H1 (cell line): ENCODE measurements at regions of chr5 and their contacts with region 1.

Region 1: GRCh38 chr5:59380350-59380951 is 513.1 kb downstream of the PDE4D start:
- DNase-seq: no peak
- H3K4me3 ChIP-seq: no peak overlapping the region
- H3K27ac ChIP-seq: no peak overlapping the region
- H3K4me1 ChIP-seq: no peaks in the 10 kb centered on the region
- H3K27me3 ChIP-seq: no peaks in the 10 kb centered on the region
- CTCF ChIP-seq: peak in 1 of 3 experiments; percentile 20; a peak in 1 of 4 replicates
- EP300 ChIP-seq: no peak
- POLR2A ChIP-seq: no peak
- RAD21 ChIP-seq: peak; percentile 49

Region 2: GRCh38 chr5:59218424-59219045 is 161.9 kb before region 1 on chr5:
- CTCF ChIA-PET with region 1: interaction called, 10 read pairs
- POLR2A ChIA-PET with region 1: no interaction called
- DNase-seq: no peak
- H3K4me3 ChIP-seq: no peak overlapping the region
- H3K27ac ChIP-seq: no peak overlapping the region
- H3K4me1 ChIP-seq: no peaks in the 10 kb centered on the region
- H3K27me3 ChIP-seq: no peaks in the 10 kb centered on the region
- CTCF ChIP-seq: no peak
- EP300 ChIP-seq: no peak
- POLR2A ChIP-seq: no peak
- RAD21 ChIP-seq: no peak

Region 3: DNA sequence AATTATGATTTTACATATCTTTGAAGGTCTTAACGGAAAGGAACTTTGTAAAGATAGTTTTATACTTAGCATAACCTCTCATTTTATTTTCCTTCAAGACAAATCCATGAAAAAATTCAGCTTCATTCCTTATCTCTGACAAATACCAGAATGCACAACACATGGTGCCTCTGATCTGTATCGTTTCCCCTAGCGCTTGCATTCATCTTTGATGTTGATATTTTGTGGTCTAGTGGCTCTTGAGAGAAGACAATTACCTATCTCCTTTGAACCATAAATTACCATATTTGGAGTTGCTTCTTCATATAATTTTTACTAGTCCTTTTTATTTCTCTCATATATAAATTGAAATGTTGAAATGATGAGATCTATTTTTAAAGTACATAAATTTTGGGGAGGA is 38.3 kb before region 1 on chr5:
- CTCF ChIA-PET with region 1: no interaction called
- POLR2A ChIA-PET with region 1: no interaction called
- DNase-seq: no peak
- H3K4me3 ChIP-seq: no peak overlapping the region
- H3K27ac ChIP-seq: no peak overlapping the region
- H3K4me1 ChIP-seq: no peaks in the 10 kb centered on the region
- H3K27me3 ChIP-seq: no peaks in the 10 kb centered on the region
- CTCF ChIP-seq: no peak
- EP300 ChIP-seq: no peak
- POLR2A ChIP-seq: no peak
- RAD21 ChIP-seq: no peak

Region 4: GRCh38 chr5:59416451-59416850 is 36.0 kb after region 1 on chr5:
- CTCF ChIA-PET with region 1: no interaction called
- POLR2A ChIA-PET with region 1: no interaction called
- DNase-seq: no peak
- H3K4me3 ChIP-seq: no peak overlapping the region
- H3K27ac ChIP-seq: no peak overlapping the region
- H3K4me1 ChIP-seq: no peaks in the 10 kb centered on the region
- H3K27me3 ChIP-seq: no peaks in the 10 kb centered on the region
- CTCF ChIP-seq: no peak
- EP300 ChIP-seq: no peak
- POLR2A ChIP-seq: no peak
- RAD21 ChIP-seq: no peak

Region 5: GRCh38 chr5:59529286-59529685 is 148.8 kb after region 1 on chr5:
- CTCF ChIA-PET with region 1: no interaction called
- POLR2A ChIA-PET with region 1: no interaction called
- DNase-seq: no peak
- H3K4me3 ChIP-seq: no peak overlapping the region
- H3K27ac ChIP-seq: no peak overlapping the region
- H3K4me1 ChIP-seq: peaks cover 0 to 3% (median 1%) of the 10 kb centered on the region in 4 experiments; a peak in 2 of 7 replicates
- H3K27me3 ChIP-seq: no peaks in the 10 kb centered on the region
- CTCF ChIP-seq: no peak
- EP300 ChIP-seq: no peak
- POLR2A ChIP-seq: no peak
- RAD21 ChIP-seq: no peak